ENCODE measurements at regions of chr6 and their contacts with region 1.

Region 1: GRCh38 chr6:34610819-34611477 is 54.8 kb upstream of the SPDEF start:
- DNase-seq: peak; percentile 60
- H3K4me3 Mint-ChIP-seq: no peak overlapping the region
- H3K27ac Mint-ChIP-seq: peak overlapping the region; percentile 91
- H3K4me1 Mint-ChIP-seq: peaks cover 31% of the 10 kb centered on the region
- H3K27me3 Mint-ChIP-seq: no peaks in the 10 kb centered on the region
- CTCF ChIP-seq: no peak

Region 2: DNA sequence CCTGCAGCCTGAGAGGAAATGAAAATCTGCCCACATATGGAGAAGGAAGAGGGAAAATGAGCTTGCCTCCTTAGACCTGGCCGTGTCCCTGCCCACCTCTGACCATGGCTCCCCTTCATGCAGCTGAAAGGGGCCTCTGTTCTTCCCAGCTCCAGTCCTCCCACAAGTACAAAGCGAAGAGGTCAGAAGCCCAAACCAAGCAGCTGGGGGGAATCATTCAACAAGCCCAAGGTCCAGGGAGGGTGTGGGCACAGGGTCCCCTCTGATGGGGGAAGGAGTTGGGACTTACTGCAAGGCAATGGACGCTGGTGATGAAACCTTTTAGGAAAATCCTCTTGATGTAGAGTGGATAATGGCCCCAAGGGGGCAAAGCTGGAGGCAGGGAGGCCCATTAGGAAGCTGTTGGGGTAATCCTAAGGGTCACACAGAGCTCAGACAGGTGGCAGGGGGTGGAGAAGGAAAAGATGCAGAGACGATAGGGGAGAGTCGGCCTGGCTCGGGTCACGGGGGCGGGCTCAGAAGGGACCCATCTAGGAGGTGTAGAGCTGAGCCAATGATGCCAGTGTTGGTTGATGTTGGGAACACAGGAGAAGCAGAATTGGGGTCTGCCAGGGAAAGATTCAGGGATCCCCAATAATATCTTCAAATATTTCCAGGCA is 449.0 kb before region 1 on chr6:
- CTCF ChIA-PET with region 1: no interaction called
- intact Hi-C with region 1: loop called (anchors 5 kb)
- DNase-seq: no peak
- H3K4me3 Mint-ChIP-seq: no peak overlapping the region
- H3K27ac Mint-ChIP-seq: no peak overlapping the region
- H3K4me1 Mint-ChIP-seq: no peaks in the 10 kb centered on the region
- H3K27me3 Mint-ChIP-seq: peaks cover 54% of the 10 kb centered on the region
- CTCF ChIP-seq: no peak

Region 3: GRCh38 chr6:34526992-34527728 is 83.8 kb before region 1 on chr6:
- CTCF ChIA-PET with region 1: interaction called, 20 read pairs
- intact Hi-C with region 1: loop called (anchors 1 kb)
- DNase-seq: peak; percentile 100
- H3K4me3 Mint-ChIP-seq: peak overlapping the region; percentile 22
- H3K27ac Mint-ChIP-seq: no peak overlapping the region
- H3K4me1 Mint-ChIP-seq: peaks cover 21% of the 10 kb centered on the region
- H3K27me3 Mint-ChIP-seq: peaks cover 17% of the 10 kb centered on the region
- CTCF ChIP-seq: peak; percentile 87